ENCODE measurements at regions of chrX and their contacts with region 1.

Region 1: GRCh38 chrX:51892921-51893745 is at the start of gene MAGED1:
- DNase-seq: peak; percentile 25 to 80 (median 73)
- ATAC-seq: peak; percentile 93
- H3K4me3 ChIP-seq: peak within 1 kb of the TSS; percentile 50
- H3K4me3 Mint-ChIP-seq: peak within 1 kb of the TSS; percentile 88 to 98 (median 94)
- H3K27ac ChIP-seq: peak within 1 kb of the TSS; percentile 67
- H3K27ac Mint-ChIP-seq: peak within 1 kb of the TSS; percentile 85 to 95 (median 93)
- H3K4me1 ChIP-seq: peaks cover 0 to 3% of the 10 kb centered on the region in 2 donors
- H3K4me1 Mint-ChIP-seq: peaks cover 6 to 26% (median 19%) of the 10 kb centered on the region in 7 donors
- H3K27me3 ChIP-seq: no peaks in the 10 kb centered on the region
- H3K27me3 Mint-ChIP-seq: peaks cover 0 to 2% (median 0%) of the 10 kb centered on the region in 5 donors
- total RNA-seq, gene MAGED1: 26.3 to 41.9 (median 29.5) TPM

Region 2: DNA sequence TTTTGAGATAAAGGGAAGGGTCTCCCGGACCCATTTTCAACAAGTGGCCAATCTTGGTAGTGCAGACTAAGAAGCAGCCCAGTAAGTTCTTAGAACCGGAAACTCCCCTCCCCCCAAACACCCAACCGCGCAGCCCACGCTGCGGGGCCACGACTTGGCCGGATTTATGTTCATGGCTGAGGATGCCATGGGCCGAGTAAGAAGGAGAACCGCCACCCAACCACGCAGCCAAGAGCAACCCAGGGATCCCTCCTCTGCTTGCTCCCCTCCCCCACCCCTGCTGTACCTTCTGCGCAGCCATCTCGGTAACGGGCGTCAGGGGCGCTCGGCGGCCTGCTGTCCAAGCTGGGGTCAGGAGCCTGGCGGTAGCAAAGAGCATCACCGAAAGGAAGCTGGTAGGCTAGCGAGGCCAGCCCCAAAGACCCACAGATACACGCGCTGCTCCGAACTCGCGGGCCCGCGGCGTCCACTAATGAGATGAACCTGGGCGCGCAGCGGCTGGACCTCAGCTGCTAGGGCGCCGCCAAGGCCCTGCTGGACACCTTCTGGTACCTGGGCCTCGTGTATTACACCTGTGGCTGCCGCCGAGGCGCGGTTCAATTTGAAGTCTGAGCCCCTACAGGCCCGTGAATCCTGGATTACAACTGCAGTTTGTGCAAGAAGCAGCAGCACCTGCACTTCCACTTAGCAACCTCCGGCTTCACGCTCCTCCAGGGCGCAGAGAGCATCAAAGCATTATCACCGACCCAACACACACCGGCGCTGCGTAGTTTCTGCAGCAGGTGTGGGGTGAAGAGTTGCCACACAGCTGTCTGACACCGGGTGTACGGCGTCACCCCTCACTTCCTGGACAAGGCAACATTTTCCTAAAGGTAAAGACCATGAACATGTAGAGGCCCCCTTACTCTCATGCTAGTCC is 497.1 kb before region 1 on chrX:
- CTCF ChIA-PET with region 1: no interaction called
- POLR2A ChIA-PET with region 1: no interaction called
- intact Hi-C with region 1: loop called in 1 of 2 experiments (anchors 5 kb)
- DNase-seq: peak; percentile 24 to 80 (median 70)
- ATAC-seq: peak; percentile 94
- H3K4me3 ChIP-seq: peak overlapping the region; percentile 74
- H3K4me3 Mint-ChIP-seq: peak overlapping the region; percentile 89 to 98 (median 94)
- H3K27ac ChIP-seq: peak overlapping the region; percentile 73
- H3K27ac Mint-ChIP-seq: peak overlapping the region; percentile 89 to 99 (median 93)
- H3K4me1 ChIP-seq: no peaks in the 10 kb centered on the region
- H3K4me1 Mint-ChIP-seq: peaks cover 10 to 69% (median 61%) of the 10 kb centered on the region in 7 donors
- H3K27me3 ChIP-seq: no peaks in the 10 kb centered on the region
- H3K27me3 Mint-ChIP-seq: no peaks in the 10 kb centered on the region

Region 3: GRCh38 chrX:51496501-51497291 is 396.4 kb before region 1 on chrX and contains the start of gene NUDT11:
- CTCF ChIA-PET with region 1: no interaction called
- POLR2A ChIA-PET with region 1: no interaction called
- intact Hi-C with region 1: loop called in 1 of 2 experiments (anchors 10 kb)
- DNase-seq: peak in 5 of 9 donors; percentile 4 to 69 (median 8)
- ATAC-seq: peak; percentile 64
- H3K4me3 ChIP-seq: peak within 1 kb of the TSS; percentile 30
- H3K4me3 Mint-ChIP-seq: peak within 1 kb of the TSS; percentile 71 to 88 (median 84)
- H3K27ac ChIP-seq: no peak within 1 kb of the TSS
- H3K27ac Mint-ChIP-seq: peak within 1 kb of the TSS in 2 of 9 donors; percentile 74 to 80
- H3K4me1 ChIP-seq: no peaks in the 10 kb centered on the region
- H3K4me1 Mint-ChIP-seq: peaks cover 0 to 11% (median 6%) of the 10 kb centered on the region in 7 donors
- H3K27me3 ChIP-seq: peaks cover 0 to 4% of the 10 kb centered on the region in 2 donors
- H3K27me3 Mint-ChIP-seq: peaks cover 16 to 25% (median 24%) of the 10 kb centered on the region in 5 donors
- total RNA-seq, gene NUDT11: 0.13 to 1.2 (median 0.47) TPM in 4 of 5 experiments, not detected in the other

Region 4: GRCh38 chrX:52995135-52996020 is 1102.2 kb after region 1 on chrX:
- CTCF ChIA-PET with region 1: no interaction called
- POLR2A ChIA-PET with region 1: no interaction called
- intact Hi-C with region 1: loop called in 1 of 2 experiments (anchors 5 kb)
- DNase-seq: peak; percentile 67 to 94 (median 91)
- ATAC-seq: peak; percentile 98
- H3K4me3 ChIP-seq: peak overlapping the region; percentile 92
- H3K4me3 Mint-ChIP-seq: peak overlapping the region; percentile 84 to 98 (median 94)
- H3K27ac ChIP-seq: peak overlapping the region; percentile 84
- H3K27ac Mint-ChIP-seq: peak overlapping the region; percentile 97 to 100 (median 99)
- H3K4me1 ChIP-seq: peaks cover 7 to 12% of the 10 kb centered on the region in 2 donors
- H3K4me1 Mint-ChIP-seq: peaks cover 11 to 25% (median 19%) of the 10 kb centered on the region in 7 donors
- H3K27me3 ChIP-seq: no peaks in the 10 kb centered on the region
- H3K27me3 Mint-ChIP-seq: peaks cover 0 to under 1% (median 0%) of the 10 kb centered on the region in 5 donors